ENCODE measurements at regions of chr17 and their contacts with region 1.

Region 1: GRCh38 chr17:10646392-10646990 is 10.6 kb downstream of the MYH3 start:
- DNase-seq: peak; percentile 80
- ATAC-seq: peak; percentile 63
- H3K4me3 Mint-ChIP-seq: no peak overlapping the region
- H3K27ac Mint-ChIP-seq: no peak overlapping the region
- H3K4me1 Mint-ChIP-seq: no peaks in the 10 kb centered on the region
- H3K27me3 Mint-ChIP-seq: no peaks in the 10 kb centered on the region

Region 2: GRCh38 chr17:10557422-10557821 is 89.1 kb before region 1 on chr17:
- CTCF ChIA-PET with region 1: no interaction called
- POLR2A ChIA-PET with region 1: no interaction called
- DNase-seq: no peak
- ATAC-seq: no peak
- H3K4me3 Mint-ChIP-seq: no peak overlapping the region
- H3K27ac Mint-ChIP-seq: no peak overlapping the region
- H3K4me1 Mint-ChIP-seq: no peaks in the 10 kb centered on the region
- H3K27me3 Mint-ChIP-seq: no peaks in the 10 kb centered on the region

Region 3: DNA sequence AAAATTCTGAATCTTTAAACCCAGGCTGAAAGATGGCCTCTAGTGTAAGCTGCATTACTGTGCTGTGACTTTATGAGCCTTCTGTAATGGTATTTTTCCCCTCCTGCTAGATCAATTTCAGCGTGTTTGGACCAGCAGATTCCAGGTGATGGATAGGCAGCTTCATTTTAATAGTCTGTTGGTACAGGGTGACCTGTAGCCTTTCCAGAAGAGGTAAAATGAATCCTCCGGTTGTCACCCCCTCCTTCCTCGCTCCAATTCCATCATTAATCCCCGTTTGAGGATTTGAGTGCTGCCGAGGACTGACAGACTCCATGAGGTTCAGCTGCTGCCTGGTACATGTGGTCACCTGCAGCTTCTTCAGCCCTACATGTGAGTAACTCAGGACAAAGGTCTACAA is 38.2 kb before region 1 on chr17:
- CTCF ChIA-PET with region 1: no interaction called
- POLR2A ChIA-PET with region 1: no interaction called
- DNase-seq: no peak
- ATAC-seq: no peak
- H3K4me3 Mint-ChIP-seq: no peak overlapping the region
- H3K27ac Mint-ChIP-seq: no peak overlapping the region
- H3K4me1 Mint-ChIP-seq: no peaks in the 10 kb centered on the region
- H3K27me3 Mint-ChIP-seq: no peaks in the 10 kb centered on the region

Region 4: DNA sequence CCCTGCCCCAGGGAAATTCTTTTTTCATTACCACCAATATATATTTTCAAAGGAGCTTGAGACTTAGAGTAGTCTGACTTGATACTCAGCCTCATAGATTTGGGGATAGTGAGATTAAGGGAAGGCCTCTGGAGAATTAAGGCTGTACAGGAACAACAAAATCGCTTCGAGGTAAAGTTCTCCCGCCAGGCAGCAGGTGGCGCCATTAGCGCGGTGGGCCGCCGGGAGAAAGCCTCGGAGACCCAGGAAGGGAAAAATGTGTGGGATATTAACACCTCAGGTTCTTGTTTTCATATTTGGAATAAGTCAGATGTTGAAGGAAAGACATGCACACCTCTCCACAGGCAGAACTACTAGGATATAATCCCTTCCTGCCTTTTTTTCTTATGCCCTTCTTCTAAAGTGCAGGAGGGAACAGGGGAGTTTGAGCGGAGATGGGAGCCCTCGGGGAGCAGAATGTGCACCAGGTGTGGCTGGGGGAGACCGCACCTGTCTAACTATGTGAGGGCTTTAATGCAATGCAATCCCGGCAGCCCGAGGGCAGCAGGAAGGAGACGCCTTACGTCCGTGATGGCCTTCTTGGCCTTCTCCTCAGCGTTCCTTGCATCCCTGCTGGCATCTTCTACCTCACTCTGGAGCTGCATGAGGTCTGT is 15.3 kb before region 1 on chr17:
- CTCF ChIA-PET with region 1: interaction called, 41 read pairs
- POLR2A ChIA-PET with region 1: no interaction called
- DNase-seq: peak; percentile 28
- ATAC-seq: no peak
- H3K4me3 Mint-ChIP-seq: no peak overlapping the region
- H3K27ac Mint-ChIP-seq: no peak overlapping the region
- H3K4me1 Mint-ChIP-seq: peaks cover 3% of the 10 kb centered on the region
- H3K27me3 Mint-ChIP-seq: no peaks in the 10 kb centered on the region

Region 5: GRCh38 chr17:10683853-10684252 is 37.4 kb after region 1 on chr17:
- CTCF ChIA-PET with region 1: interaction called, 44 read pairs
- POLR2A ChIA-PET with region 1: no interaction called
- DNase-seq: no peak
- ATAC-seq: no peak
- H3K4me3 Mint-ChIP-seq: no peak overlapping the region
- H3K27ac Mint-ChIP-seq: no peak overlapping the region
- H3K4me1 Mint-ChIP-seq: peaks cover 3% of the 10 kb centered on the region
- H3K27me3 Mint-ChIP-seq: no peaks in the 10 kb centered on the region

Region 6: GRCh38 chr17:10737168-10737622 is 90.7 kb after region 1 on chr17:
- CTCF ChIA-PET with region 1: interaction called, 19 read pairs
- POLR2A ChIA-PET with region 1: no interaction called
- DNase-seq: peak; percentile 56
- ATAC-seq: peak; percentile 49
- H3K4me3 Mint-ChIP-seq: no peak overlapping the region
- H3K27ac Mint-ChIP-seq: no peak overlapping the region
- H3K4me1 Mint-ChIP-seq: peaks cover 3% of the 10 kb centered on the region
- H3K27me3 Mint-ChIP-seq: peaks cover 6% of the 10 kb centered on the region